PC-9 (cell line): ENCODE measurements at regions of chr16 and their contacts with region 1.

Region 1: GRCh38 chr16:69243479-69243878 is 56.5 kb downstream of the SNTB2 start:
- DNase-seq: no peak
- H3K4me3 ChIP-seq: no peak overlapping the region
- H3K27ac ChIP-seq: no peak overlapping the region
- H3K4me1 ChIP-seq: no peaks in the 10 kb centered on the region
- H3K27me3 ChIP-seq: no peaks in the 10 kb centered on the region
- CTCF ChIP-seq: no peak

Region 2: GRCh38 chr16:67767953-67768352 is 1475.5 kb before region 1 on chr16:
- CTCF ChIA-PET with region 1: no interaction called
- POLR2A ChIA-PET with region 1: interaction called, 26 read pairs
- intact Hi-C with region 1: no loop called
- DNase-seq: no peak
- H3K4me3 ChIP-seq: no peak overlapping the region
- H3K27ac ChIP-seq: no peak overlapping the region
- H3K4me1 ChIP-seq: no peaks in the 10 kb centered on the region
- H3K27me3 ChIP-seq: no peaks in the 10 kb centered on the region
- CTCF ChIP-seq: no peak

Region 3: DNA sequence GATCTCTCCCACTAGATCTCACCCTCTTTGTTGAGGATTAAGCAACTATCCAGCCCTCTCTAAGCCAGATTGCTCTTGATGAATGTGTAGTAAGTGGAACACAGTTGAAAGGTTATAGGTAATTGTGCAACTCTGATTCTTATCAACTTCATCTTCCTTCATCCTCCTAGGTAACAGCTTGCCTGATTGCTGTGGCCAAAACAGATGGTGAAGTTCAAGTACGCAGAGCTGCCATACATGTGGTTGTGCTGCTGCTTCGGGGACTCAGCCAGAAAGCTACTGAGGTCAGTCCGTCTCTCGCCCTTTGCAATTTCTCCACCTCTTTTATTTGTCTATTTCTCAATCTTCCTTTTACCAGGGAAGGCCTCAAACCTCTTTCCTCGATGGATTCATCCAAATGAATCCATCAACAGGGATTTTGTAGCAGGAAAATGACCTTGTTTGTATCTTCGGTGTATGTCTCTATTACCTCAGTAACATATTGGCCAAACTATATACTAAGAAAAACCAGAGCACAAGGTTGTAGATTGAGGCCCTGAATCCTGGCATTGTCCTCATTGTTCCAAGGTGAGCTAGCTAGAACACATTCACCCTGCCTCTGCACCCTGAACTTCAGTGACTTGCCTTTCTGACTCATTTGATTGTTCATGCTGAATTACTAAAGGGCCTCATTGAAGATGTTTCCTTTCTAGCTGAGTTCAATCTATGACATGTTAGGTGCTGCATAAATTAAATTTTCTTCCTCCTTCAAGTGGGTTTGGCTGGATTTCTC is 203.2 kb before region 1 on chr16:
- CTCF ChIA-PET with region 1: no interaction called
- POLR2A ChIA-PET with region 1: no interaction called
- intact Hi-C with region 1: loop called (anchors 5 kb)
- DNase-seq: peak in 1 of 2 experiments; percentile 76
- H3K4me3 ChIP-seq: no peak overlapping the region
- H3K27ac ChIP-seq: peak overlapping the region; percentile 60
- H3K4me1 ChIP-seq: peaks cover 38% of the 10 kb centered on the region
- H3K27me3 ChIP-seq: no peaks in the 10 kb centered on the region
- CTCF ChIP-seq: no peak